HepG2 (cell line): ENCODE measurements at regions of chr9 and their contacts with region 1.

Region 1: DNA sequence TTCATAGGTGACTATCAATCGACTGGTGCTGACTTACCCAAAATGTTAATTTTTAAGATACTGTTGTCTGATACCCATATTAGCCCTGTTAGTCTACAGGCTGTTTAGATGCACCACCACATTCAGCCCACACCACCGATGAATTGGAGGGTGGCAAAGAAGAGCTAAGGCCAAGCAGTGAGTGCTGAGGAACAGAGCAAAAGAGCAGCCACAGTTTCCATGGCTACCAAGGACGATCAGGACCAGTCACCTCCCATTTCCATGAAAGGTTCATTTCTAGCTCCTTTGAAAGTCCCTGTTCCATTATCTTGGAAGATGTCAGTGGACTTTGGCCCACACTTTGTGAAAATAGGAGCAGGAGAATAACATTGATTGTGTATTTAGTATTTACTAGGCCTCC is 362.9 kb downstream of the TRIM32 start:
- DNase-seq: no peak
- ATAC-seq: no peak
- H3K4me3 ChIP-seq: no peak overlapping the region
- H3K27ac ChIP-seq: no peak overlapping the region
- H3K4me1 ChIP-seq: no peaks in the 10 kb centered on the region
- H3K27me3 ChIP-seq: no peaks in the 10 kb centered on the region
- CTCF ChIP-seq: no peak
- EP300 ChIP-seq: no peak
- POLR2A ChIP-seq: no peak
- RAD21 ChIP-seq: no peak

Region 2: DNA sequence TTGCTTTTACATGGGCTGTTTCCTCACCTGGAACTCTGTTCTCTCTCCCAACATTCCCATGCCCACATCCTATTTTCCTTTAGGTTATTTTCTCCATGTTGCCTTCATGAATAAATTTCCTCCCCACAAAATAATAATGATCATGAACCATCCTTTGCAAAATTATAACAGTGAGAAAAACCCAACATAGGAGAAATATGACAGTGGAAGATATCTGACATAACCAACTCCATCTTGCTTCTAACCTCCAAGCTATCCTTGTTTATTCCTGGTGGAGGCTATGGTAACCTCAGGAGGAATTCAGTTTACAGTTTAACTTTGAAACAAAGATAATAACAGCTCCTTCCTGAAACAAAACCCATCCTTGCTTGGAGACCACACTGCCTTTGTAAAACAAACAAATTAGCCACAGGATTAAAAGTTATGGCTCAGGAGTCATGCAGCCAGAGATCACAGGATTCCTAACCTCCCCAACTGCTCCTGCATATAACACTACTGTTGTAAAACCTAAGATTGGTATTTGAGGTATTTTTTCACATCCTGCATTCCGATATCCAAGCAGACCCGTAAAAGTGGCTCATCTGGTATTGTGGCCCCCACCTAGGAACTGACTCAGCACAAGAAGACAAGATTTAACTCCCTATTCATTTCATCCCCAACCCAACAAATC is 150.5 kb before region 1 on chr9:
- CTCF ChIA-PET with region 1: no interaction called
- POLR2A ChIA-PET with region 1: no interaction called
- in situ Hi-C with region 1: no loop called
- intact Hi-C with region 1: loop called (anchors 5 kb)
- DNase-seq: no peak
- ATAC-seq: no peak
- H3K4me3 ChIP-seq: no peak overlapping the region
- H3K27ac ChIP-seq: no peak overlapping the region
- H3K4me1 ChIP-seq: no peaks in the 10 kb centered on the region
- H3K27me3 ChIP-seq: no peaks in the 10 kb centered on the region
- CTCF ChIP-seq: no peak
- EP300 ChIP-seq: no peak
- POLR2A ChIP-seq: no peak
- RAD21 ChIP-seq: no peak

Region 3: DNA sequence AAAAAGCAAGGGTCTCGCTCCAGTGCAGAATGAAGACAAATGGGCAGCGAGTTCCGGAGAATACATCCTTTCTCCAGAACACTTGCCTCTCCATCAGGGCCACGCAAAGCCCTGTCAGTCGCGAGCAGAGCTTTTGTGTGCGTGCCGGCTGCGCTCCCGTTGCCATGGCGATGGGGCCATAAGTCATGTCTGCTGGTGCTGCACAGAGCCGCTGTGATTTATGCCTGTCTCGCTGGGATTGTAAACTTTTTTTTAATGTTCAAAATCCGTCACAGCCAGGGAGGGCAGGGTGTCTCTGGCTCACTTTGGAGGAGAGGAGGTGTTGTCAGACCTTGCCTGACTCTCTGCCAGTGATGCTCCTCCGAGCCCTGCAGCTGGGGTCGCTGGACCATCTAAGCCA is 90.2 kb before region 1 on chr9:
- CTCF ChIA-PET with region 1: no interaction called
- POLR2A ChIA-PET with region 1: no interaction called
- in situ Hi-C with region 1: no loop called
- intact Hi-C with region 1: no loop called
- DNase-seq: no peak
- ATAC-seq: no peak
- H3K4me3 ChIP-seq: no peak overlapping the region
- H3K27ac ChIP-seq: no peak overlapping the region
- H3K4me1 ChIP-seq: no peaks in the 10 kb centered on the region
- H3K27me3 ChIP-seq: no peaks in the 10 kb centered on the region; a peak in 1 of 5 replicates
- CTCF ChIP-seq: no peak
- EP300 ChIP-seq: no peak
- POLR2A ChIP-seq: no peak
- RAD21 ChIP-seq: no peak

Region 4: GRCh38 chr9:117013440-117013995 is 36.5 kb before region 1 on chr9:
- CTCF ChIA-PET with region 1: no interaction called
- POLR2A ChIA-PET with region 1: no interaction called
- in situ Hi-C with region 1: no loop called
- intact Hi-C with region 1: no loop called
- DNase-seq: no peak
- ATAC-seq: no peak
- H3K4me3 ChIP-seq: no peak overlapping the region
- H3K27ac ChIP-seq: no peak overlapping the region
- H3K4me1 ChIP-seq: no peaks in the 10 kb centered on the region
- H3K27me3 ChIP-seq: no peaks in the 10 kb centered on the region
- CTCF ChIP-seq: no peak
- EP300 ChIP-seq: no peak
- POLR2A ChIP-seq: no peak
- RAD21 ChIP-seq: no peak

Region 5: GRCh38 chr9:117508647-117509046 is 458.6 kb after region 1 on chr9:
- CTCF ChIA-PET with region 1: no interaction called
- POLR2A ChIA-PET with region 1: no interaction called
- in situ Hi-C with region 1: no loop called
- intact Hi-C with region 1: no loop called
- DNase-seq: no peak
- ATAC-seq: no peak
- H3K4me3 ChIP-seq: no peak overlapping the region
- H3K27ac ChIP-seq: no peak overlapping the region
- H3K4me1 ChIP-seq: no peaks in the 10 kb centered on the region
- H3K27me3 ChIP-seq: no peaks in the 10 kb centered on the region
- CTCF ChIP-seq: no peak
- EP300 ChIP-seq: no peak
- POLR2A ChIP-seq: no peak
- RAD21 ChIP-seq: no peak